ENCODE measurements at regions of chr10 and their contacts with region 1.

Region 1: GRCh38 chr10:73879296-73880173 is 5.2 kb upstream of the CAMK2G start:
- DNase-seq: peak; percentile 78 to 91
- H3K4me3 ChIP-seq: no peak overlapping the region
- H3K27ac ChIP-seq: no peak overlapping the region
- H3K4me1 ChIP-seq: peaks cover 50% of the 10 kb centered on the region
- H3K27me3 ChIP-seq: no peaks in the 10 kb centered on the region
- CTCF ChIP-seq: peak; percentile 93

Region 2: DNA sequence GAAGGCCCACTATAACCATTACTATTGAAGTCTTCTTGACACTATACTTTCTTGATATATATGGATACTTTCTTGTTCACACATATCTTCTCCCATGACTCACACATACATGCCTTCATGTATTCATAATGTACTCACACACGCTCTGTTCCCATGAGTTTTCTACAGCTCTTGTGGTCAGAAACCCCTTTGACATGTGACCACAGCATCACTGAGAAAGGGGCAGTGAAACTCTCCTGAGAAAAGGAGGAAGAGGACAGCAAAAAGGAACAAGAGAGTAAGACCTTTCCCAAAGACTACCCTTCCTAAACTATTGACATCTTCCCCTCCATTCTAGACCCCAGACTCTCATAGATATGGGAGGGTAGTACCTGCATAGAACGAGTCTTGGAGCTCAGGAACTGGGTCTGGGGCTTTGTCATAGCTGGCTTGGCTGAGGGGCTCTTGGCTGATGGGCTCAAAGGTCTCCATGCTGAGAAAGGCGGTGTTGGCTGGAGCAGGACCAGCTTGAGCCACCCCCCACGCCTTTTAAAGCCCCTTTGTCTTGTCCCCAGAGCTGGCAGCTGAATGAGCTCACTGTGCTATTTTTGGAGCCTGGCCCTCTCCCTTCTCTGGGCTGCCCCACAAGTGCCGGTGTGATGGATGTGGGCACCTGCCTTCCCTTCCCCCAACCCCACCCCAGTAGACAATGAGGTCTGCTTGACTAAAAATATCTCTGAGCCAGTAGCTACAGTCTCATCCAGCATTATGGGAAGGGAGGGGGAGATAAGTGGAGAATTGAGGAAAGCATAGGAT is 228.8 kb before region 1 on chr10:
- CTCF ChIA-PET with region 1: no interaction called
- POLR2A ChIA-PET with region 1: no interaction called
- intact Hi-C with region 1: loop called (anchors 5 kb)
- DNase-seq: no peak
- H3K4me3 ChIP-seq: no peak overlapping the region
- H3K27ac ChIP-seq: no peak overlapping the region
- H3K4me1 ChIP-seq: no peaks in the 10 kb centered on the region
- H3K27me3 ChIP-seq: no peaks in the 10 kb centered on the region
- CTCF ChIP-seq: no peak

Region 3: GRCh38 chr10:73848821-73849489 is 30.6 kb before region 1 on chr10:
- CTCF ChIA-PET with region 1: interaction called, 10 read pairs
- POLR2A ChIA-PET with region 1: interaction called, 3 read pairs
- intact Hi-C with region 1: loop called (anchors 1 kb)
- DNase-seq: peak; percentile 66 to 82
- H3K4me3 ChIP-seq: no peak overlapping the region
- H3K27ac ChIP-seq: no peak overlapping the region
- H3K4me1 ChIP-seq: no peaks in the 10 kb centered on the region
- H3K27me3 ChIP-seq: no peaks in the 10 kb centered on the region
- CTCF ChIP-seq: peak; percentile 100

Region 4: DNA sequence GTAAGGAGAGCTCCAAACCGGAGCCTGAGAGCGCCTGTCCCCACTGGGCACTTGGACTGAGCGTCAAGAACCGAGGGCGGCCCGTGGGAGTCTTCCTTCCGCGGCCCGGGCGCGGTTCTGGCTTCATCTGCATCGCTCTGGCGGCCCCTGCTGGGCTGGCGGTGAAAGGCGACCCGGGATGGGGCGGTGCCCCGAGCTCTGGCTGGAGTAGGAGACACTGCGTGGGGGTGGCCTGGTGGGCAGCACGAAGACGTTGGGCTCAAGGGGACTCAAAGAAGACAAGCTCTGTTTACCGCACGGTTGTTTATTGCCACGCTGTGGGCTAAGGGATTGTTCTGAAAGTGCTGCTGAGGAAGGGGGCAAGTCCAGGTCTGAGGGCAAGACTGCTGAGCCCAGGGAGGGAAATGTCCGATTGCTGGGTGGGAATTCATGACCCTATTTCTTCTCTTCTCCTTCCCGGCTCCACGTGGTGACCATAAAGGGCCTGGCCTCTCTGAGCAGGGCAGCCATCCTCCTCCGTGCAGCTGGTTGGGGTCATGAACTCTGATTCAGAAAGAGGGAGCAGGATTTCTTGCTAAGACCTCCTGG is 61.2 kb after region 1 on chr10:
- CTCF ChIA-PET with region 1: interaction called, 14 read pairs
- POLR2A ChIA-PET with region 1: interaction called, 3 read pairs
- intact Hi-C with region 1: no loop called
- DNase-seq: peak; percentile 57 to 87
- H3K4me3 ChIP-seq: peak overlapping the region; percentile 44; the same call in 1 of the 2 replicates
- H3K27ac ChIP-seq: peak overlapping the region; percentile 64
- H3K4me1 ChIP-seq: peaks cover 38% of the 10 kb centered on the region
- H3K27me3 ChIP-seq: no peaks in the 10 kb centered on the region
- CTCF ChIP-seq: peak; percentile 96

Region 5: GRCh38 chr10:73965890-73966768 is 86.6 kb after region 1 on chr10:
- CTCF ChIA-PET with region 1: interaction called, 4 read pairs
- POLR2A ChIA-PET with region 1: interaction called, 11 read pairs
- intact Hi-C with region 1: no loop called
- DNase-seq: peak; percentile 93 to 99
- H3K4me3 ChIP-seq: peak overlapping the region; percentile 43; the same call in 1 of the 2 replicates
- H3K27ac ChIP-seq: peak overlapping the region; percentile 99
- H3K4me1 ChIP-seq: peaks cover 38% of the 10 kb centered on the region
- H3K27me3 ChIP-seq: no peaks in the 10 kb centered on the region
- CTCF ChIP-seq: no peak

Region 6: DNA sequence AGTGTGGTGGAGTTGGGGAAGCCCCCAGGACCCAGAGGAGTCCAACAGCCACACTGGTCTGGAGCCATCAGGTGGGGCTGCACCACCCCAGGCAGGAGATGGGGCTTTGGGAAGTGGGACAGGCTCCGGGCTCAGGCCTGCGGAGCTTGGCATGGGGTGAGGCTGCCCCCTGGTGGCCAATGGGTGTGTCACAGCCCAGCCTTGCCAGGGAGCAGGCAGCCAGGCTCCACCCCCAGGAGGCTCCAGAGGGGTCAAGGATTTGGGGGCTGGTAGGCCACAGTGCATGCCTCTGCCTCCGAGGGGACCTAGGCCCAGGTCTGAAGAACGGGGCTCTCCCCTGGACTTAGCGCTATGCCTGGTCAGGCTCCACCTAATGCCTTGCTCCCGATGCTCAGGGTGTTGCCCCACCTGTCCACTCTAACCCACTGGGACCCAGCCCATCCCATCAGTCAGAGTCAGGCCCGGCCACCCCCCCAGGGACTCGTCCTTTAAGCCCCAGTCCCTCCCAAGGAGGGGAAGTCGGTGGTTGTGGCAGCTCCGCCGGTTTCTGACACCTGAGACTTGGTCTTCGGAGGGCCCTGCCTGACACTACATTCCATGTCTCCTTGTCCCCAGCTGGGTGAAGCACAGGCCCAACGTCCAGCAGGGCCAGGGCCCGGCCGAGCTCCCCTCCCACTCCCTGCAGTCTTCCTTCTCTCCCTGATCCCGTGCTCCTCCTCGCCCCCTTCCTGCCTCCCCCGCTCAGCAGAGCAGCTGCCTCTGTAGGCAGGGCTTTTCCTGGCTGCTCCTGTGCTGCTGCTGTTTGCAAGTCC is 1220.6 kb after region 1 on chr10:
- CTCF ChIA-PET with region 1: no interaction called
- POLR2A ChIA-PET with region 1: no interaction called
- intact Hi-C with region 1: loop called (anchors 10 kb)
- DNase-seq: peak; percentile 52 to 84
- H3K4me3 ChIP-seq: no peak overlapping the region
- H3K27ac ChIP-seq: no peak overlapping the region
- H3K4me1 ChIP-seq: no peaks in the 10 kb centered on the region
- H3K27me3 ChIP-seq: no peaks in the 10 kb centered on the region
- CTCF ChIP-seq: peak; percentile 94